ENCODE measurements at regions of chr7 and their contacts with region 1.

Region 1: GRCh38 chr7:6160191-6160623 is 112.2 kb downstream of the CYTH3 start:
- DNase-seq: peak; percentile 48 to 76
- ATAC-seq: peak; percentile 72 to 79
- H3K4me3 ChIP-seq: no peak overlapping the region
- H3K27ac ChIP-seq: peak overlapping the region in 1 of 2 experiments; percentile 25; a peak in 1 of 6 replicates
- H3K4me1 ChIP-seq: no peaks in the 10 kb centered on the region
- CTCF ChIP-seq: peak; percentile 79
- EP300 ChIP-seq: no peak
- POLR2A ChIP-seq: no peak
- RAD21 ChIP-seq: peak; percentile 70 to 77

Region 2: DNA sequence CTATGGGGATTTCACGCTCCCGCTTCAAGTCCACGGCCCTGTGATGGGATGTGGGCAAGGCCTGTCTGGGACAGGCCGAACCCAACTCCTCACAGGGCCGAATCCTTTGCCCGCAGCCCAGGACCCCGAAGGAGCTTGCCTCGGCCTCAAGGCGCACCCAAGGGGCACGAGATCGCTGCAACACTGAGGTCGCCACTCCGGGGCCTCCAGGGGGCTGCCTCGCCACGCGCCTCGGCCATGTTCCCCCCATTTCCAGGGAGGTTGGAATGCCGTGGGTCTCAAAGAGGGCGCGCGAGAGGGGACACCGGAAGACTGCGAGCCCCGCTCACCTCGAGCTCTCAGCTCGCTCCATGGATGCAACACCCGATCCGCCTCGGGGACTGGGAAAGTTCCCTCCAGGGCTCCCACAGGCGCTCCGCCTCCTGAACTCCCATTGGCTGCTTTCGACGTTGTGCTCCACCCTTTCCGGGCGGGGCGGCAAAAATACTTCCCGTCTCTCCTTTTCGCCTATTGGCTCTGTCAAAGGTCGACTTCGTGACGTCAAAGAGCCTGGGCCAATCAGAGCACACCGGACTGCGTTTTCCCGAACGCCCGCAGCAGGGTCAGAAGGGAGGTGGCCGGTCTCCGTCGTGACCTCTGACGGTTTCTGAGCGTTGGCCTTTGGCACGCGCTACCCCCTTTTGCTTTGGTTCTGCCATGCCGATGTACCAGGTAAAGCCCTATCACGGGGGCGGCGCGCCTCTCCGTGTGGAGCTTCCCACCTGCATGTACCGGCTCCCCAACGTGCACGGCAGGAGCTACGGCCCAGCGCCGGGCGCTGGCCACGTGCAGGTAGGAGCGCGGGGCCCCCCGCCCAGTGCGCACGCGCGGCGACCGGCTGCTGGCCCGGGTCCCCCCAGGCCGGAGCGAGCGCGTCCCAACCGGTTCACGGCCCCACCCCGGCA is 151.3 kb before region 1 on chr7 and contains the starts of genes AIMP2 and PMS2:
- CTCF ChIA-PET with region 1: no interaction called
- POLR2A ChIA-PET with region 1: no interaction called
- DNase-seq: peak; percentile 96 to 99
- ATAC-seq: peak; percentile 97 to 99
- H3K4me3 ChIP-seq: peak within 1 kb of the TSS; percentile 71
- H3K27ac ChIP-seq: peak within 1 kb of the TSS; percentile 86 to 95
- H3K4me1 ChIP-seq: peaks cover 32% of the 10 kb centered on the region; the same call in 2 of the 3 replicates
- CTCF ChIP-seq: no peak; the same call in 2 of the 3 replicates
- EP300 ChIP-seq: no peak
- POLR2A ChIP-seq: peak; percentile 77
- RAD21 ChIP-seq: no peak; a peak in 1 of 5 replicates
- polyA plus RNA-seq, gene AIMP2: 119 and 128 TPM in 2 replicates
- polyA plus RNA-seq, gene PMS2: 16.3 and 19.9 TPM in 2 replicates

Region 3: DNA sequence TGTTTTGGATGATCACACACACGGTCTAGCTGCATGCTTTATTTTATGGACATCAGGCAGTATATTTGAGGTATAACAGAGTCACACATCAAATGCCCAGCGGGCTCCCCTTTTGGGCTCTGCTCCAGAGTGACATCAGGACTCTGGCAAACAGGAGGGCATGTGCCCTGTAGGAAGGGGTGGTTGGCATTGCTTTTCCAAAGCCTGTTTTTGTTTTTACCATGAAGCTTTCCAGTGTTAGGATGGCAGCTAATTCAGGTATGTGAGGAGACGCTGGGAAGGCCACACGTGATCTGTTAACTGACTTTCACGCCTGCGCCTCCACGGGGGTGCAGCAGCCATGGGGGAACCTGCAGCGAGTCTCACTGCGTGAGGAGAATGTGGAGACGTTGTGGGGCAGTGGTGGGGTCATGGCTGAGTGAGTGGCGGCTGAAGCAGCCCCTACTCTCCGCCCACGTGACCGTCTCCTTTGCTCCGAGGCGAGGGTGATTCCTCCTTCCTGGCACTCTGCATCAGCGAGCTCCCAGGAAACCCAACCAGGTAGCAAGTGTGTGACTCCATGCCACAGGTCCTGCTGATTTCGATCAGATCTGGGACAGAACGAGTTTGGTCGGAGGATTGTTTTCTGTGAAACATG is 11.4 kb before region 1 on chr7:
- CTCF ChIA-PET with region 1: interaction called, 25 read pairs
- POLR2A ChIA-PET with region 1: no interaction called
- DNase-seq: no peak
- ATAC-seq: no peak
- H3K4me3 ChIP-seq: no peak overlapping the region
- H3K27ac ChIP-seq: no peak overlapping the region
- H3K4me1 ChIP-seq: no peaks in the 10 kb centered on the region
- CTCF ChIP-seq: no peak
- EP300 ChIP-seq: no peak
- POLR2A ChIP-seq: no peak
- RAD21 ChIP-seq: no peak

Region 4: DNA sequence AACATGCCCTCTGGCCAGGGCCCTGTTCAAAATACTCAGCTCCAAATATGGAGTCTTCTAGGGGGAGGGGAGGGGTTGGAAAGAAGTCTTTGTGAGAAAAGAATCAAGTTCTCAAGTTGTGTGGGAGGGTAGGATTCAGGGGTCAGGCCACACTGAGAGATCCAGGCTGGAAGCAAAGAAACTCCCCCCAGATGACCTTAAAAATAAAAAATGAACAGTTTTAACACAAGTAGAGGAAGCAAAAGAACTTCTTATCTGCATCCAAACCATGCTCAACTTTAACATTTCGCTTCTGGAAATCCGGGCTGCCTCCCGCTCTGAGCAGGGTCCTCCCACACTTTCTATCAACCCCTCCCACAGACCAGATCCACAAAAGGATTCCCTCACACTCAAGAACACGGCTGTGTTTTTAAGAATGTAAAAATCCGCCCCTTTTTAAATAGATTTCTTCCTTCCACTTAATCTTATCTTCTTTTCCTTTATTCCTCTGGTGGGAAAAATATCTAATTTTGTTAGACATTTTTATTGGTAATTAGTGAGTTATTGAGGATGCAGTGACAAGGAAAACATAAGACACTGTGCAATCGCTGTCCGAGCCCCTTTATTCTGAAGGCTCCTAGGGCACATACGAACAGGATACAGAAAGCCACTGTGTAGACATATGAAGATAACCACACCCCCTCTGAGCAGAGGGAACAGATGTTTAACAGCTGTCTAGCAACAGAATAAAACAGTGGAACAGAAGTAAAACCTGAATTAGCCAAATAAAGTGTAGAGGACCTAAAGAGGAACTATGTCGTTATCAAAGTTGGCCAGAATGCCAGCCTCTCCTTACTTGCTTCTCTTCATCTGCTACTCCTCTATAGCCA is 68.4 kb after region 1 on chr7:
- CTCF ChIA-PET with region 1: no interaction called
- POLR2A ChIA-PET with region 1: no interaction called
- DNase-seq: no peak
- ATAC-seq: peak in 1 of 2 experiments; percentile 13; a peak in 1 of 6 replicates
- H3K4me3 ChIP-seq: no peak overlapping the region
- H3K27ac ChIP-seq: no peak overlapping the region
- H3K4me1 ChIP-seq: peaks cover 67% of the 10 kb centered on the region
- CTCF ChIP-seq: no peak
- EP300 ChIP-seq: no peak
- POLR2A ChIP-seq: no peak
- RAD21 ChIP-seq: no peak

Region 5: DNA sequence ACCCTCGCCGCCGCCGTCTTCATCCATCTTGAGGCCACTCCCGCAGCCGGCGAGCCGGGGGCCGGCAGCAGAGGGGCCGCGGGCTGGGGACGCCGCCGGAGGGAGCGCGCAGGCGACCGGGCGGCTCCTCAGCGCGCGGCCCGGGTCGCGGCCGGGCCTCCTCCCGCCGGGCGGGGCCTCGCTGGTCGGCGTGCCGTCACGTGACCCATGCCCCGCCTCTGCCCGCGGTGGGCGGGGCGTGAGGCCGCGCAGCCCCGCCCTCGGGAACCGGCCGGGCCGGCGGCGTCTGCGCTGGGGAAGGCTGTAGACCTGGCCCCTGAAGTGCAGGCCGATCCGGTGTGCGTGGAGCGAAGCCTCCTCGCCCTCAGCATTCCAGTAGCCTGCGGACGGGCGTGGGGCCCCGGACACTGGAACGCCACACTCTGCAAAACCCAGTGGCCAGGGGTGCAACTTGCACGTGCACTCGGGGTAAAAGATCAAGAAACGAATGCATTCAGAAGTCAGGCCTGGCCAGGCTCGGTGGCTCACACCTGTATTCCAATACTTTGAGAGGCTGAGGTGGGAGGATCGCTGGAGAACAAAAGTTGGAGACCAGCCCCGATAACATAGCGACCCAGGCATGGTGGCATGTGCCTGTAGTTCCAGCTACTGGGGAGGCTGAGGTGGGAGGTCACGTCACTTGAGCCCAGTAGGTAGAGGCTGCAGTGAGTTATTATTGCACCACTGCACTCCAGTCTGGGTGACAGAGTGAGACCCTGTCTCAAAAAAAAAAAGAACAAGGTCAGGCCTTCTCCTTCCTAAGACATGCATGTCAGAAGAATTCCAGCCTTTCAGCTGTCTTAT is 112.5 kb after region 1 on chr7 and contains the start of gene CYTH3:
- CTCF ChIA-PET with region 1: interaction called, 37 read pairs
- POLR2A ChIA-PET with region 1: interaction called, 3 read pairs
- DNase-seq: peak; percentile 76 to 86
- ATAC-seq: peak; percentile 76 to 83
- H3K4me3 ChIP-seq: peak within 1 kb of the TSS; percentile 90
- H3K27ac ChIP-seq: peak within 1 kb of the TSS; percentile 82 to 97
- H3K4me1 ChIP-seq: peaks cover 38% of the 10 kb centered on the region
- CTCF ChIP-seq: no peak
- EP300 ChIP-seq: no peak
- POLR2A ChIP-seq: peak; percentile 89
- RAD21 ChIP-seq: no peak; a peak in 1 of 5 replicates
- polyA plus RNA-seq, gene CYTH3: 15.5 and 18.6 TPM in 2 replicates

Region 6: DNA sequence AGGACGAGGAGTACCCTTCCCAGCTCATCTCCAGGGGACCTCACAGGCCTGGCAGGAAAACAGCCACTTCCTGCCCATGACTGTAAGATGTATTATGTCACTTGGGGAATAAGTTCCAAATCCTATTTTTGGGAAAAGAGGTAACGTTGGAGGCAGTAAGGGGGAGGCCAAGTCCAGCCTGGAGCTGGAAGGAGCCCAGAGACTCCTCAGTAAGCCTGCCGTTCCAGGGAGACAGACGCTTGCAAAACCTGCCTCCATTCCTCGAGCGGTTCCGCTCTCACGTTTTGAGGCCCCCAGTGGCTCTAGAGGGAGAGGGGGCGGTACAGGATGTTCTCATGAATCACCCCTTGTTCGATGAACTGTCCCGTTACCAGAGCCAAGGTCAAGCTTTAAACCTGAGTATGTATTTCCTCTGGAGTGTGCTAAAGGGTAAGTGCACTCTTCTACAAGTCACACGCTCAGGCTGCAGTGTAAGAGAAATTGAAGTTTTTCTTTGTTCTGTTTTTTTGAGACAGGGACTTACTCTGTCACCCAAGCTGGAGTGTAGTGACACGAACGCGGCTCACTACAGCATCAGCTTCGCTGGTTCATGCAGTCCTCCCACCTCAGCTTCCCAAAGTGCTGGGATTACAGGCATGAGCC is 157.7 kb after region 1 on chr7:
- CTCF ChIA-PET with region 1: interaction called, 102 read pairs
- POLR2A ChIA-PET with region 1: no interaction called
- DNase-seq: peak in 1 of 2 experiments; percentile 29
- ATAC-seq: peak; percentile 53 to 54; a peak in 3 of 6 replicates
- H3K4me3 ChIP-seq: no peak overlapping the region
- H3K27ac ChIP-seq: peak overlapping the region; percentile 32 to 80; a peak in 5 of 6 replicates
- H3K4me1 ChIP-seq: peaks cover 15% of the 10 kb centered on the region
- CTCF ChIP-seq: no peak
- EP300 ChIP-seq: no peak
- POLR2A ChIP-seq: no peak
- RAD21 ChIP-seq: no peak

Region 7: DNA sequence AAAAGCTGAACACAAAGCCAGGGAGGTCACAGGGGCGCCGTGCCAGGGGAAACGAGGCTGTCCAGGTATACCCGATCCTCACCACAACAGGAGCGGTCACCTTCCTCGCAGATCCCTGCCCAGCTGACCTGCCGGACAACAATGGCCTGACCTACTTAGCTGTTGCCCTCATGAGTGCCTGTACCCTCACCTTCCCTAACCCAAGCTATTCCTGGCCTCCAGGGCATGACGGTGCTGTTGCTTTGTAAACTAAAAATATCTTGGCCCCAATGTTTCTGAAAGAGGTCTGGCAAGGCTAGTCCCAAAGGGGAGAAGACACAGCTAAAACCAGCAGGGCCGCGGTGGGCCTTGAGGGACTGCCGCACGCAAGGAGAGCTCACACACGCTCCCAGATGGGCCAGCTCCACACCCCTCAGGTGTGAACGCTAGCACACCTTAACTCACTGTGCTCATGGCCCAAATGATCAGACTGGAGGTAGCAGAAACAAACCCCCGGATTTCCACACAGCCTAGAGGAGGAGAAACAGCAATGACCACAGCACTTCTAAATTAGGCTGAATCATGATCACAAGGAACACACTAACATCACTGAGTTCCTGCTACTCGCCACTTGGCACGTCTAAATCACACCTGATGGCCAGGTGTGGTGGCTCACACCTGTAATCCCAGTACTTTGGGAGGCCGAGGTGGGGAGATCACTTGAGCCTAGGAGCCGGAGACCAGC is 178.5 kb after region 1 on chr7:
- CTCF ChIA-PET with region 1: interaction called, 13 read pairs
- POLR2A ChIA-PET with region 1: no interaction called
- DNase-seq: no peak
- ATAC-seq: no peak; a peak in 1 of 6 replicates
- H3K4me3 ChIP-seq: no peak overlapping the region
- H3K27ac ChIP-seq: no peak overlapping the region
- H3K4me1 ChIP-seq: no peaks in the 10 kb centered on the region
- CTCF ChIP-seq: no peak
- EP300 ChIP-seq: no peak
- POLR2A ChIP-seq: no peak
- RAD21 ChIP-seq: no peak